SK-N-SH (cell line): ENCODE measurements at regions of chr6 and their contacts with region 1.

Region 1: GRCh38 chr6:125956506-125957390 is at the start of gene HINT3:
- DNase-seq: peak; percentile 92
- H3K4me3 ChIP-seq: peak within 1 kb of the TSS; percentile 79 to 96
- H3K27ac ChIP-seq: peak within 1 kb of the TSS; percentile 68 to 90
- H3K4me1 ChIP-seq: peaks cover 7 to 8% of the 10 kb centered on the region in 2 experiments; a peak in 3 of 4 replicates
- H3K27me3 ChIP-seq: no peaks in the 10 kb centered on the region
- CTCF ChIP-seq: peak; percentile 97
- EP300 ChIP-seq: peak in 1 of 2 experiments; percentile 12; a peak in 1 of 4 replicates
- RAD21 ChIP-seq: peak; percentile 75
- polyA plus RNA-seq, gene HINT3: 1.8 and 1.9 TPM in 2 replicates

Region 2: DNA sequence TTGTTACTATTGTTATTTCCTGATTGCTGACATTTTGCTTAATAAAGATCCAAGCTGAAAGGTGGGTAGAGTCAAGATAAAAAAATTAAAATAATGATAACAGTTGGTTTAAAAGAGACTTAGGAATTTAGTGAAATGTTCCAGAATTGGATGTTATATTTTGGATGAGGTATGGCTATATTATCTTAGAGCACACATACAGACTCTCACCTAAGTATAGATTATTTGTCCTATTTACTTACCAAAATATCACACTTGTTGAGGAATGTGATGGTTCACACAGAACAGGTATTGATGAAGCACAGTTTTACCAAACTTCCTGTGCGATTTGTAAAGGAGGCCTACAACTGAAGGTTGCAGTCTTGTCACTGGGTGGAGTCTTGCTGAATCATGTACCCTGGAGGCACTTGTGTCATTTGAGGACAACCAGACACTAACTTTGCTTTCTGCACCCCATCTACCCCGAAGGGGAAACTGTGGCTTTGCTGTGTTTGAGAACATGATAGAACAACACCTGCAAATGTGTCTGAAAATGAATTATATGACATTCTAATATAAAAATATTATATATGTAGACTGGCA is 32.7 kb before region 1 on chr6:
- CTCF ChIA-PET with region 1: interaction called, 18 read pairs
- POLR2A ChIA-PET with region 1: no interaction called
- DNase-seq: no peak
- H3K4me3 ChIP-seq: no peak overlapping the region
- H3K27ac ChIP-seq: no peak overlapping the region
- H3K4me1 ChIP-seq: peaks cover 0 to 11% of the 10 kb centered on the region in 2 experiments; a peak in 2 of 4 replicates
- H3K27me3 ChIP-seq: no peaks in the 10 kb centered on the region
- CTCF ChIP-seq: no peak
- EP300 ChIP-seq: no peak
- RAD21 ChIP-seq: no peak

Region 3: GRCh38 chr6:125944434-125944816 is 12.3 kb before region 1 on chr6:
- CTCF ChIA-PET with region 1: interaction called, 11 read pairs
- POLR2A ChIA-PET with region 1: no interaction called
- DNase-seq: no peak
- H3K4me3 ChIP-seq: no peak overlapping the region
- H3K27ac ChIP-seq: no peak overlapping the region
- H3K4me1 ChIP-seq: peaks cover 0 to 19% of the 10 kb centered on the region in 2 experiments; a peak in 1 of 4 replicates
- H3K27me3 ChIP-seq: no peaks in the 10 kb centered on the region
- CTCF ChIP-seq: no peak
- EP300 ChIP-seq: no peak
- RAD21 ChIP-seq: no peak

Region 4: DNA sequence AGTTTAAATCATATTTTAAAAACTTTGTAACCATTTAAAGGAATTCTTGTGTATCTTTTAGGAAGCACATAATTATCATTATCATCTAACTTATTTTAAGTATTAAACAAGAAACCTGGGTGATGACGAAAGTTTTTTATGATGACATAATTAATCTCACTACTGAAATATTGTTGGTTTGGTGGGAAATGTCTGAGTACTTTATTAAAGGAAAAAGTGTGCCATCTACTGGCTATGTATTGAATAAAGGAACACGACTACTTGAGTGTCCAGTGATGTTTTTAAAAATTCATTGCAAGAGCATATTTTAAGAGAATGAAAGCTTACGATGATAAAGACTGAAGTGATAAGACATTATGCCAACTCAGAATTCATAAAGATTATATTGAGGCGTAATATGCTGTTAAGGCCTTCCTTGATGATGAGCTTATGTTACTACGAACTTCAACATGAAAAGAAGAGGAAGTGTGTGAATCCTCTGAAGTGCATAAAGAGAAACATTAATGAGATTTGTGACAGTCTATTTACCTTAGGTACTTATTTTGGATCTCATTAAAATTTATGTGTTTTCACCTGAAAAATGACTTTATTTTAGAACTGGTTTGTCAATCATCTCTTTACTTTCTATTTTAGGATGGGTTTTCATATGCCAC is 17.6 kb after region 1 on chr6:
- CTCF ChIA-PET with region 1: interaction called, 46 read pairs
- POLR2A ChIA-PET with region 1: interaction called, 3 read pairs
- DNase-seq: peak; percentile 34
- H3K4me3 ChIP-seq: no peak overlapping the region
- H3K27ac ChIP-seq: no peak overlapping the region
- H3K4me1 ChIP-seq: no peaks in the 10 kb centered on the region
- H3K27me3 ChIP-seq: no peaks in the 10 kb centered on the region
- CTCF ChIP-seq: peak; percentile 74
- EP300 ChIP-seq: no peak
- RAD21 ChIP-seq: peak; percentile 80

Region 5: GRCh38 chr6:125986300-125987025 is 29.7 kb after region 1 on chr6 and contains the start of gene TRMT11:
- CTCF ChIA-PET with region 1: interaction called, 23 read pairs
- POLR2A ChIA-PET with region 1: no interaction called
- DNase-seq: peak; percentile 91
- H3K4me3 ChIP-seq: peak within 1 kb of the TSS; percentile 88 to 98
- H3K27ac ChIP-seq: peak within 1 kb of the TSS; percentile 53 to 87; a peak in 3 of 4 replicates
- H3K4me1 ChIP-seq: peaks cover 3 to 21% of the 10 kb centered on the region in 2 experiments
- H3K27me3 ChIP-seq: no peaks in the 10 kb centered on the region
- CTCF ChIP-seq: no peak
- EP300 ChIP-seq: 0 out of 4 replicates have a peak, but pooled peaks of 1 of the 2 experiments have one; percentile 2
- RAD21 ChIP-seq: no peak
- polyA plus RNA-seq, gene TRMT11: 15.0 and 22.8 TPM in 2 replicates